ENCODE measurements at regions of chr11 and their contacts with region 1.

Region 1: GRCh38 chr11:74069147-74070047 is 60.5 kb upstream of the UCP3 start:
- DNase-seq: peak; percentile 41
- ATAC-seq: no peak
- H3K4me3 ChIP-seq: no peak overlapping the region
- H3K27ac ChIP-seq: no peak overlapping the region
- H3K4me1 ChIP-seq: no peaks in the 10 kb centered on the region; the same call in 1 of the 2 replicates
- H3K27me3 ChIP-seq: no peaks in the 10 kb centered on the region
- CTCF ChIP-seq: no peak
- POLR2A ChIP-seq: no peak
- RAD21 ChIP-seq: no peak

Region 2: DNA sequence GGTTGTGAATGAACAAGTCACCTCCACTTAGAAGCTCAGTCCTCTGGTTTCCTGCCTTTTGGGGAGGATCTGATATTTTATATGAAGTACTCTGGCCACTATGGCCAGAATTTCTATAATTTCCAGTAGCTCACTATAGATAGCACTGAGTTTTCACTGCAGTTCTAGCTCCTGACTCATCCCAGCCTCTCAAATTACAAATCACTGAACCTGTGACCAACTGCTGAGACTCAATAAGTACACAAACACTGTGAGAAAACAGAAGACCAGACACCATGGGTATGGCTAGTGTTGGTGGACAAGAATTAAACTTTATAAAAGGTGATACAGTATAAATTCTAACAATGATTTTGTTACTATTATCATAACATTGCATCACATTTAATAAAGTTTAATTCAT is 13.5 kb before region 1 on chr11:
- CTCF ChIA-PET with region 1: no interaction called
- POLR2A ChIA-PET with region 1: interaction called, 10 read pairs
- dilution Hi-C with region 1: no loop called
- in situ Hi-C with region 1: no loop called
- intact Hi-C with region 1: no loop called
- DNase-seq: peak; percentile 88
- ATAC-seq: peak; percentile 89
- H3K4me3 ChIP-seq: no peak overlapping the region
- H3K27ac ChIP-seq: no peak overlapping the region
- H3K4me1 ChIP-seq: peaks cover 10% of the 10 kb centered on the region
- H3K27me3 ChIP-seq: no peaks in the 10 kb centered on the region
- CTCF ChIP-seq: no peak
- POLR2A ChIP-seq: no peak
- RAD21 ChIP-seq: 0 out of 2 replicates have a peak, but pooled peaks have one; percentile 9